Dorsolateral prefrontal cortex (tissue), 120 donors: ENCODE measurements at regions of chr9 and their contacts with region 1.

Region 1: GRCh38 chr9:35903049-35903448 is 3.0 kb upstream of the HRCT1 start:
- DNase-seq: peak in 1 of 10 donors; percentile 51
- H3K4me3 ChIP-seq: no peak overlapping the region
- H3K27ac ChIP-seq: no peak overlapping the region
- H3K27me3 ChIP-seq: no peaks in the 10 kb centered on the region
- CTCF ChIP-seq: peak; percentile 67 to 90 (median 83)

Region 2: GRCh38 chr9:35945341-35946018 is 42.4 kb after region 1 on chr9:
- intact Hi-C with region 1: loop called (anchors 2 to 5 kb)
- DNase-seq: peak in 9 of 10 donors; percentile 44 to 75 (median 57)
- H3K4me3 ChIP-seq: peak overlapping the region in 44 of 59 donors; percentile 9 to 60 (median 35)
- H3K27ac ChIP-seq: peak overlapping the region in 6 of 59 donors; percentile 8 to 46 (median 21)
- H3K27me3 ChIP-seq: no peaks in the 10 kb centered on the region
- CTCF ChIP-seq: peak; percentile 42 to 87 (median 77)